ENCODE measurements at regions of chr12 and their contacts with region 1.

Region 1: GRCh38 chr12:9797722-9798619 is 29.3 kb upstream of the KLRF1 start:
- DNase-seq: peak in 8 of 9 donors; percentile 56 to 81 (median 73)
- ATAC-seq: peak; percentile 95
- H3K4me3 ChIP-seq: no peak overlapping the region
- H3K4me3 Mint-ChIP-seq: peak overlapping the region in 9 of 10 donors; percentile 6 to 53 (median 42)
- H3K27ac ChIP-seq: peak overlapping the region; percentile 64
- H3K27ac Mint-ChIP-seq: peak overlapping the region; percentile 39 to 89 (median 76)
- H3K4me1 ChIP-seq: peaks cover 38 to 44% of the 10 kb centered on the region in 2 donors
- H3K4me1 Mint-ChIP-seq: peaks cover 40 to 54% (median 50%) of the 10 kb centered on the region in 7 donors
- H3K27me3 ChIP-seq: no peaks in the 10 kb centered on the region
- H3K27me3 Mint-ChIP-seq: peaks cover 0 to 15% (median 0%) of the 10 kb centered on the region in 5 donors

Region 2: DNA sequence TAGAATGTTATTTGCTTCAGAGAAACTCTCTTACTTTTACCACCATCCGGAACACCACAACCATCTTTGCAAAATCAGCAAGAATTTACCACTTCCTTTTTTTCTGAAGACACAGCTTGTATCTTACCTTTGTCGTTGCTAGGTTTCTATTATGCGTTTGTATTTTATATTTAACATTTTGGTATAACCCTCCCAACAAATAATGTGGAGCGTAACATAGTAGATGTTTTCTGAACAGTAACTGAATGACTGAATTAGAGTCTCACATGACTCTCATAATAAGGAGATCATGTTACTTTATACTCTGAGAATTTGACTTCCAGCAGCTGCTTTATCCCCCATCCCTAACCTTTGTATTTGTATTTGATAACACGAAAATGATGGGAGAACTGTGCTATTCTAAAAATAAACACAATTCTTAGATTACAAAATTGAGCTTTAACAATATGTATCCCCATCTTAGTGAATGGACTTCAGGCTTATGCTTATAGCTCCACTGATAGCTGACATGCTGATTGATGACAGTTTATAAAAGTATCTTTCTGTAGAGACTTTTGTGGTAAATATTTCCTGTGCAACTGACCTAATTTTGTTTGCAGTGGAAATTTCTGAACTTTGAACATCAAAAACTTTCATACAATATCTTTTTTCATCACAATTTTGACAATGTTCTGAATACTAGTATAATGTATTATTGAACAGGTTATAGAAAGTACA is 182.4 kb before region 1 on chr12:
- CTCF ChIA-PET with region 1: no interaction called
- POLR2A ChIA-PET with region 1: no interaction called
- intact Hi-C with region 1: loop called in 1 of 2 experiments (anchors 5 kb)
- DNase-seq: peak in 7 of 9 donors; percentile 28 to 82 (median 69)
- ATAC-seq: peak; percentile 97
- H3K4me3 ChIP-seq: peak overlapping the region; percentile 35
- H3K4me3 Mint-ChIP-seq: peak overlapping the region; percentile 4 to 86 (median 78)
- H3K27ac ChIP-seq: peak overlapping the region; percentile 70
- H3K27ac Mint-ChIP-seq: peak overlapping the region; percentile 92 to 99 (median 96)
- H3K4me1 ChIP-seq: peaks cover 13 to 35% of the 10 kb centered on the region in 2 donors
- H3K4me1 Mint-ChIP-seq: peaks cover 21 to 88% (median 79%) of the 10 kb centered on the region in 7 donors
- H3K27me3 ChIP-seq: no peaks in the 10 kb centered on the region
- H3K27me3 Mint-ChIP-seq: no peaks in the 10 kb centered on the region

Region 3: DNA sequence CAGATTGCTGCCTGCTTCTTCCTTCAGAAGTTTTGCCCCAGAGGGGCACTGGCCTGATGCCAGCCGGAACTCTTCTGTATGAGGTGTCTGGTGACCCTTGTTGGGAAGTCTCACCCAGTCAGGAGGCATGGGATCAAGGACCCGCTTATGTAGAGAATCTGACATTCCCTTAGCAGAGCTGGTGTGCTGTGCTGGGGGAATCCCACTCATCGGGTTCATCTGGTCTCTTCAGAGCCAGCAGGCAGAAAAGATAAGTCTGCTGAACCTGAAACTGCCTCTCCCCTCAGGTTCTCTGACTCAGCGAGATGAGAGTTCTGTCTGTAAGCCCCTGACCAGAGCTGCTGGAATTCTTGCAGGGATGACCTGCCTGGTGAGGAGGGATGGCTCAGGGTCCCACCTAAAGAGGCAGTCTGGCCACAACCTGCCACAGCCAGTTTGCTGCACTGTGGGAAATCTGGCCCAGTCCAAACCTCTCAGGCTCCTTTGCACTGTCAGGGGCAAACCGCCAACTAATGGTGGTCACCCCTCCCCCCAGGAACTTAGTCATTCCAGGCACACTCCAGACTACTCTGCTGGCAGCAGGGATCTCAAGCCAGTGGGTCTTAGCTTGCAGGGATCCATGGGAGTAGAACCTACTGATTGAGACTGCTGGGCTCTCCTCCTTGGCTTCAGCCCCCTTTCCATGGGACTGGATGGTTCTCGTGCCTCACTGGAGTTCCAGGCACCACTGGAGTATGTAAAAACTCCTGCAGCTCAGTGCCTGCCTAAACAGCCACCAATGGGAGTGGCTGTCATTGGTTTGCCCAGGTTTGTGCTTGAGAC is 124.4 kb before region 1 on chr12:
- CTCF ChIA-PET with region 1: no interaction called
- POLR2A ChIA-PET with region 1: interaction called, 4 read pairs
- intact Hi-C with region 1: loop called in 1 of 2 experiments (anchors 2 kb)
- DNase-seq: peak in 7 of 9 donors; percentile 36 to 67 (median 45)
- ATAC-seq: peak; percentile 63
- H3K4me3 ChIP-seq: peak overlapping the region; percentile 80
- H3K4me3 Mint-ChIP-seq: peak overlapping the region; percentile 89 to 99 (median 92)
- H3K27ac ChIP-seq: peak overlapping the region; percentile 83
- H3K27ac Mint-ChIP-seq: peak overlapping the region; percentile 90 to 99 (median 95)
- H3K4me1 ChIP-seq: peaks cover 30 to 38% of the 10 kb centered on the region in 2 donors
- H3K4me1 Mint-ChIP-seq: peaks cover 42 to 80% (median 69%) of the 10 kb centered on the region in 7 donors
- H3K27me3 ChIP-seq: no peaks in the 10 kb centered on the region
- H3K27me3 Mint-ChIP-seq: peaks cover 0 to 8% (median 0%) of the 10 kb centered on the region in 5 donors

Region 4: GRCh38 chr12:9750276-9751203 is 47.4 kb before region 1 on chr12:
- CTCF ChIA-PET with region 1: interaction called, 616 read pairs
- POLR2A ChIA-PET with region 1: interaction called, 433 read pairs
- intact Hi-C with region 1: loop called (anchors 1 kb)
- DNase-seq: peak in 8 of 9 donors; percentile 51 to 78 (median 72)
- ATAC-seq: peak; percentile 73
- H3K4me3 ChIP-seq: no peak overlapping the region
- H3K4me3 Mint-ChIP-seq: peak overlapping the region; percentile 5 to 87 (median 76)
- H3K27ac ChIP-seq: peak overlapping the region; percentile 67
- H3K27ac Mint-ChIP-seq: peak overlapping the region; percentile 54 to 97 (median 81)
- H3K4me1 ChIP-seq: peaks cover 26 to 33% of the 10 kb centered on the region in 2 donors
- H3K4me1 Mint-ChIP-seq: peaks cover 19 to 61% (median 53%) of the 10 kb centered on the region in 7 donors
- H3K27me3 ChIP-seq: no peaks in the 10 kb centered on the region
- H3K27me3 Mint-ChIP-seq: peaks cover 0 to 4% (median 0%) of the 10 kb centered on the region in 5 donors

Region 5: GRCh38 chr12:9781360-9781759 is 16.6 kb before region 1 on chr12:
- CTCF ChIA-PET with region 1: interaction called, 6 read pairs
- POLR2A ChIA-PET with region 1: interaction called, 4 read pairs
- intact Hi-C with region 1: loop called in 1 of 2 experiments (anchors 1 kb)
- DNase-seq: no peak
- ATAC-seq: no peak
- H3K4me3 ChIP-seq: no peak overlapping the region
- H3K4me3 Mint-ChIP-seq: peak overlapping the region in 4 of 10 donors; percentile 30 to 59 (median 44)
- H3K27ac ChIP-seq: no peak overlapping the region
- H3K27ac Mint-ChIP-seq: peak overlapping the region in 5 of 9 donors; percentile 16 to 55 (median 43)
- H3K4me1 ChIP-seq: peaks cover 11 to 19% of the 10 kb centered on the region in 2 donors
- H3K4me1 Mint-ChIP-seq: peaks cover 26 to 66% (median 47%) of the 10 kb centered on the region in 7 donors
- H3K27me3 ChIP-seq: no peaks in the 10 kb centered on the region
- H3K27me3 Mint-ChIP-seq: no peaks in the 10 kb centered on the region

Region 6: DNA sequence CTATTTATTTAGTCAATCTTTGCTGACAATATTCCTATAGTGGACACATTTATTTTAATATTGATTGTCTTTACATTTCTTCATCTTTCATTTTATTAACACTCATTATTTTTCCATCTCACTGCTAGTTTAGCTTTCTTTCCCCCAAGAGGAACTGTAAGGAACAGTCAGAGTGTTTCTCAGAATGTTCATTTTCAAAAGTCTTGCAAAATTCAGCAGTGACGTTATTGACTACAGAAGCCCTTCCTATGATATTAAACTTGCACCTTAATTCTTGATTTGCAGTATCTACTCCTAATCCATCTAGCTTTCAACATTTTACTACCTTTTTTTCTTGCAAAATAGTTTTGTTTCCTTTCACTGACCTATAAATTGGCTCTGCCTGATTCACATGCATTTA is 58.2 kb after region 1 on chr12:
- CTCF ChIA-PET with region 1: no interaction called
- POLR2A ChIA-PET with region 1: no interaction called
- intact Hi-C with region 1: no loop called
- DNase-seq: no peak
- ATAC-seq: no peak
- H3K4me3 ChIP-seq: no peak overlapping the region
- H3K4me3 Mint-ChIP-seq: no peak overlapping the region
- H3K27ac ChIP-seq: no peak overlapping the region
- H3K27ac Mint-ChIP-seq: peak overlapping the region in 4 of 9 donors; percentile 20 to 60 (median 45)
- H3K4me1 ChIP-seq: peaks cover 3 to 10% of the 10 kb centered on the region in 2 donors
- H3K4me1 Mint-ChIP-seq: peaks cover 25 to 84% (median 63%) of the 10 kb centered on the region in 7 donors
- H3K27me3 ChIP-seq: no peaks in the 10 kb centered on the region
- H3K27me3 Mint-ChIP-seq: no peaks in the 10 kb centered on the region

Region 7: GRCh38 chr12:9869307-9870161 is 71.6 kb after region 1 on chr12 and contains the start of gene CLEC2B:
- CTCF ChIA-PET with region 1: interaction called, 5 read pairs
- POLR2A ChIA-PET with region 1: interaction called, 4 read pairs
- intact Hi-C with region 1: loop called in 1 of 2 experiments (anchors 1 kb)
- DNase-seq: peak in 7 of 9 donors; percentile 54 to 71 (median 58)
- ATAC-seq: peak; percentile 83
- H3K4me3 ChIP-seq: peak within 1 kb of the TSS; percentile 68
- H3K4me3 Mint-ChIP-seq: peak within 1 kb of the TSS; percentile 87 to 99 (median 93)
- H3K27ac ChIP-seq: peak within 1 kb of the TSS; percentile 94
- H3K27ac Mint-ChIP-seq: peak within 1 kb of the TSS; percentile 97 to 100 (median 99)
- H3K4me1 ChIP-seq: peaks cover 7 to 14% of the 10 kb centered on the region in 2 donors
- H3K4me1 Mint-ChIP-seq: peaks cover 7 to 44% (median 29%) of the 10 kb centered on the region in 7 donors
- H3K27me3 ChIP-seq: no peaks in the 10 kb centered on the region
- H3K27me3 Mint-ChIP-seq: no peaks in the 10 kb centered on the region
- total RNA-seq, gene CLEC2B: 50.1 to 86.8 (median 73.8) TPM

Region 8: GRCh38 chr12:10243818-10244520 is 446.0 kb after region 1 on chr12:
- CTCF ChIA-PET with region 1: no interaction called
- POLR2A ChIA-PET with region 1: no interaction called
- intact Hi-C with region 1: no loop called
- DNase-seq: no peak
- ATAC-seq: peak; percentile 54
- H3K4me3 ChIP-seq: no peak overlapping the region
- H3K4me3 Mint-ChIP-seq: peak overlapping the region in 8 of 10 donors; percentile 3 to 74 (median 49)
- H3K27ac ChIP-seq: no peak overlapping the region
- H3K27ac Mint-ChIP-seq: peak overlapping the region in 1 of 9 donors; percentile 78
- H3K4me1 ChIP-seq: peaks cover 5 to 25% of the 10 kb centered on the region in 2 donors
- H3K4me1 Mint-ChIP-seq: peaks cover 11 to 24% (median 13%) of the 10 kb centered on the region in 7 donors
- H3K27me3 ChIP-seq: no peaks in the 10 kb centered on the region
- H3K27me3 Mint-ChIP-seq: peaks cover under 1 to 51% (median 8%) of the 10 kb centered on the region in 5 donors

Measured in naive thymus-derived CD4-positive, alpha-beta T cell (primary cell).